Activated B cell treated with CpG ODN at 0.5 μM for 24 hours (primary cell): ENCODE measurements at regions of chr6 and their contacts with region 1.

Region 1: DNA sequence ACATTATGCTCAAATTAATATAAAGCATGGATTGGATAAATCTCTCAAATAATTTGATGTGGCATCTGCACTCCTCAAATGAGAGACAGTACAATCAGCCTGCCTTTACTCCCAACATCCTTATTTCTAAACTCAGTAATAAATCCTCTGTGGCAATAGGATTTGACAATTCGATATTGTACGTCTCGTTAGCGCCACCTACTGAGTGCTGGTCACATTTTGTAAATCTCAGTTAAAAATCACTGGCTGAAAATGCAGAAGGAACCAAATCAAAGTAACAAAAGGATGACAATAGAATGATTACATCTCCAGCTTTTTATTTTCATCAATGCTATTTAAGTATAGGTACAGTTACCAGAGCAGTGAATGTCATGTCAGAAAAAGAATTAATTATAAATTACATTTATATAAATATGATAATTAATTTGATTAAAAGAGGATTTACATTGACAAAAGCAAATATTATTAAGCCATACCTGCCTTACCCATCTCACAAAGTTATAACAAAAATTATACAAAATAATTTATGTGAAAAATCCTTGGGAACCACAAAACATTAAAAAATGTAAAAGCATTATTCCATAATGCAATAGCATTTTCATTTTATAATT is 20.2 kb upstream of the GJE1 start:
- DNase-seq: no peak
- ATAC-seq: peak; percentile 34
- H3K4me3 Mint-ChIP-seq: no peak overlapping the region
- H3K27ac Mint-ChIP-seq: no peak overlapping the region
- H3K4me1 Mint-ChIP-seq: no peaks in the 10 kb centered on the region
- H3K27me3 Mint-ChIP-seq: peaks cover 2% of the 10 kb centered on the region
- CTCF ChIP-seq: peak; percentile 70

Region 2: DNA sequence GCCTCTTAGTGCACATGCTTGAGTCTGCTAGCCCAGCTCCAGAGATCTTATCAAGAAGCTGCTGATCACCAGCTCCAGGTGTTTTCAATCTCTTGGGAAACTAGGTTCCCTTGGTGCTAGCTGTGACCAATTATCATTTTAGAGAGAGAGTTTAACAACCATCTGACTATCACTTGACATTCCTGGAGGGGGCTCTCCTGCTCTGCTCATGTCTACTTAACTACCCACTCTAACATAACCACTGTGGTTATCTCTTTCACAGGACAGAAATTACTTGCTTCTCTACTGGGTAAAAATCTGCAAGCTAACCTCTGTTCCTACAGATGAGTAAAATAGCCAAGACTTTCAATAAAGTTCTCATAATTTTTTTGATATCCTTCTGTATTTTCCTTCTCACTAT is 803.3 kb before region 1 on chr6:
- CTCF ChIA-PET with region 1: no interaction called
- POLR2A ChIA-PET with region 1: no interaction called
- intact Hi-C with region 1: loop called (anchors 2 kb)
- DNase-seq: no peak
- ATAC-seq: peak; percentile 54
- H3K4me3 Mint-ChIP-seq: no peak overlapping the region
- H3K27ac Mint-ChIP-seq: no peak overlapping the region
- H3K4me1 Mint-ChIP-seq: peaks cover 4% of the 10 kb centered on the region
- H3K27me3 Mint-ChIP-seq: no peaks in the 10 kb centered on the region
- CTCF ChIP-seq: no peak

Region 3: GRCh38 chr6:141541581-141542324 is 570.8 kb before region 1 on chr6:
- CTCF ChIA-PET with region 1: no interaction called
- POLR2A ChIA-PET with region 1: no interaction called
- intact Hi-C with region 1: no loop called
- DNase-seq: no peak
- ATAC-seq: no peak
- H3K4me3 Mint-ChIP-seq: no peak overlapping the region
- H3K27ac Mint-ChIP-seq: no peak overlapping the region
- H3K4me1 Mint-ChIP-seq: no peaks in the 10 kb centered on the region
- H3K27me3 Mint-ChIP-seq: no peaks in the 10 kb centered on the region
- CTCF ChIP-seq: no peak

Region 4: GRCh38 chr6:141653590-141653989 is 459.0 kb before region 1 on chr6:
- CTCF ChIA-PET with region 1: no interaction called
- POLR2A ChIA-PET with region 1: no interaction called
- intact Hi-C with region 1: no loop called
- DNase-seq: no peak
- ATAC-seq: no peak
- H3K4me3 Mint-ChIP-seq: no peak overlapping the region
- H3K27ac Mint-ChIP-seq: no peak overlapping the region
- H3K4me1 Mint-ChIP-seq: no peaks in the 10 kb centered on the region
- H3K27me3 Mint-ChIP-seq: no peaks in the 10 kb centered on the region
- CTCF ChIP-seq: no peak

Region 5: GRCh38 chr6:141677598-141678211 is 434.9 kb before region 1 on chr6:
- CTCF ChIA-PET with region 1: no interaction called
- POLR2A ChIA-PET with region 1: no interaction called
- intact Hi-C with region 1: loop called (anchors 2 kb)
- DNase-seq: no peak
- ATAC-seq: peak; percentile 40
- H3K4me3 Mint-ChIP-seq: no peak overlapping the region
- H3K27ac Mint-ChIP-seq: no peak overlapping the region
- H3K4me1 Mint-ChIP-seq: no peaks in the 10 kb centered on the region
- H3K27me3 Mint-ChIP-seq: no peaks in the 10 kb centered on the region
- CTCF ChIP-seq: no peak

Region 6: DNA sequence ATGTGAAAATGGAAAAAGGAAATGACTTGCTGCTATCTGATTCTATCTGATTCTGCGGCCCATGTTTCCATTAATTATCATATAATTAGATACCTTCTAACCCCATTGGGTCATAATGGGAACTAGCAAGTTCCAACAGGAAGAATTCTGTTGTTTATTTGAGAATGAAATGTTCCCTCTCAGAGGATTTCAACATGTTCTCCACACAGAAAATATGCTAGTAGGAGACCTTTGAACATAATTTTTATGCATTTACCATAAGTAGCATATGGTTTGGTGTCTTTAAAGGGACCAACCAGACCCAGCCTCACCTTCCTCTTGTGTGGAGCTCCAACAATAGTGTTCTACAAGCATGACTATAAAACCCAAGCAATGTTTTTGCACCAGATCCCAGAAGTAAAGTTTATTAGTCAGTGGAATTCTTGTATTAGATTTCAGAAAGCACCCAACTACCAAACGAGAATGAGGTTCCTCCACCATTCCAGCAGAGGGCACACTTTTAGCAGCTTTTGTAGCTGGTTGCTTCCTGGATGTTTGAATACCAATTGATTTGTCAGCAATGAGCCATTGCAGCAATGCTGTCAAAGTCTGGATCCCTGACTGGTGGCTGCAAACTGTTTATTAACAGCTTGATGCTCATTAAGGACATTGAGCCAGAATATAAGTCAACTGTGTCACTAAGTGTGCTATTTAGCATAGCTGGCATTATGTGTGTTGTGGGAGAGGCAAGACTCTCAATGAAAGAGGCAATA is 123.4 kb before region 1 on chr6:
- CTCF ChIA-PET with region 1: interaction called, 4 read pairs
- POLR2A ChIA-PET with region 1: no interaction called
- intact Hi-C with region 1: loop called (anchors 1 kb)
- DNase-seq: no peak
- ATAC-seq: no peak
- H3K4me3 Mint-ChIP-seq: no peak overlapping the region
- H3K27ac Mint-ChIP-seq: no peak overlapping the region
- H3K4me1 Mint-ChIP-seq: no peaks in the 10 kb centered on the region
- H3K27me3 Mint-ChIP-seq: no peaks in the 10 kb centered on the region
- CTCF ChIP-seq: no peak

Region 7: DNA sequence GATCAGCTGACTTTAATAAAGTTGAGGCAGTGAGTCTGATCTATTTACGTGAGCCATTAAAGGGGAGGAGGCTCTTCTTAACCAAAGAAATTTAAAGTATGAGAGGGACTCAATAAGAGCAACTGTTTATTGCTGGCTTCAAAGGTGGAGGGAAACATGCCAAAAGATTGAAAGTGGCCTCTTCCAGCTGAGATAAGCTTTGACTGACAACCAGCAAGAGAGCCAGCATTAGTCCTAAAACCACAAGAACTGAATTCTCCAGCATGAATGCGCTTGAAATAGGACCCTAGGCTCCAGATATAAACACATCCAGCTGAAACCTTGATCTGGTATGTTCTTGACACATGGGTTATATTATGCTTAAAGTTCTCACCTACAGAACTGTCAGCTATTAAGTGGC is 102.9 kb before region 1 on chr6:
- CTCF ChIA-PET with region 1: no interaction called
- POLR2A ChIA-PET with region 1: no interaction called
- intact Hi-C with region 1: no loop called
- DNase-seq: no peak
- ATAC-seq: no peak
- H3K4me3 Mint-ChIP-seq: no peak overlapping the region
- H3K27ac Mint-ChIP-seq: no peak overlapping the region
- H3K4me1 Mint-ChIP-seq: no peaks in the 10 kb centered on the region
- H3K27me3 Mint-ChIP-seq: no peaks in the 10 kb centered on the region
- CTCF ChIP-seq: no peak

Region 8: GRCh38 chr6:142132625-142133024 is 20.1 kb after region 1 on chr6 and contains the start of gene GJE1:
- CTCF ChIA-PET with region 1: no interaction called
- POLR2A ChIA-PET with region 1: no interaction called
- intact Hi-C with region 1: no loop called
- DNase-seq: no peak
- ATAC-seq: no peak
- H3K4me3 Mint-ChIP-seq: no peak within 1 kb of the TSS
- H3K27ac Mint-ChIP-seq: no peak within 1 kb of the TSS
- H3K4me1 Mint-ChIP-seq: no peaks in the 10 kb centered on the region
- H3K27me3 Mint-ChIP-seq: peaks cover 20% of the 10 kb centered on the region
- CTCF ChIP-seq: no peak
- total RNA-seq, gene GJE1: not detected in 2 replicates